ENCODE measurements at regions of chr15 and their contacts with region 1.

Region 1: GRCh38 chr15:51982013-51982769 is 10.6 kb upstream of the LEO1 start:
- DNase-seq: peak in 1 of 2 donors; percentile 82
- ATAC-seq: peak; percentile 87 to 95 (median 93)
- H3K4me3 ChIP-seq: no peak overlapping the region
- H3K4me3 Mint-ChIP-seq: peak overlapping the region; percentile 56
- H3K27ac ChIP-seq: no peak overlapping the region
- H3K27ac Mint-ChIP-seq: peak overlapping the region in 1 of 2 donors; percentile 69
- H3K4me1 ChIP-seq: peaks cover 3% of the 10 kb centered on the region
- H3K4me1 Mint-ChIP-seq: peaks cover 11% of the 10 kb centered on the region in 2 donors
- H3K27me3 ChIP-seq: no peaks in the 10 kb centered on the region
- H3K27me3 Mint-ChIP-seq: no peaks in the 10 kb centered on the region
- CTCF ChIP-seq: peak; percentile 69

Region 2: GRCh38 chr15:51837792-51838251 is 144.4 kb before region 1 on chr15:
- intact Hi-C with region 1: no loop called
- DNase-seq: peak in 1 of 2 donors; percentile 45
- ATAC-seq: peak; percentile 70 to 87 (median 83)
- H3K4me3 ChIP-seq: no peak overlapping the region
- H3K4me3 Mint-ChIP-seq: no peak overlapping the region
- H3K27ac ChIP-seq: peak overlapping the region; percentile 13
- H3K27ac Mint-ChIP-seq: peak overlapping the region; percentile 54 to 73
- H3K4me1 ChIP-seq: peaks cover 16% of the 10 kb centered on the region
- H3K4me1 Mint-ChIP-seq: peaks cover 79 to 92% of the 10 kb centered on the region in 2 donors
- H3K27me3 ChIP-seq: no peaks in the 10 kb centered on the region
- H3K27me3 Mint-ChIP-seq: no peaks in the 10 kb centered on the region
- CTCF ChIP-seq: no peak

Region 3: DNA sequence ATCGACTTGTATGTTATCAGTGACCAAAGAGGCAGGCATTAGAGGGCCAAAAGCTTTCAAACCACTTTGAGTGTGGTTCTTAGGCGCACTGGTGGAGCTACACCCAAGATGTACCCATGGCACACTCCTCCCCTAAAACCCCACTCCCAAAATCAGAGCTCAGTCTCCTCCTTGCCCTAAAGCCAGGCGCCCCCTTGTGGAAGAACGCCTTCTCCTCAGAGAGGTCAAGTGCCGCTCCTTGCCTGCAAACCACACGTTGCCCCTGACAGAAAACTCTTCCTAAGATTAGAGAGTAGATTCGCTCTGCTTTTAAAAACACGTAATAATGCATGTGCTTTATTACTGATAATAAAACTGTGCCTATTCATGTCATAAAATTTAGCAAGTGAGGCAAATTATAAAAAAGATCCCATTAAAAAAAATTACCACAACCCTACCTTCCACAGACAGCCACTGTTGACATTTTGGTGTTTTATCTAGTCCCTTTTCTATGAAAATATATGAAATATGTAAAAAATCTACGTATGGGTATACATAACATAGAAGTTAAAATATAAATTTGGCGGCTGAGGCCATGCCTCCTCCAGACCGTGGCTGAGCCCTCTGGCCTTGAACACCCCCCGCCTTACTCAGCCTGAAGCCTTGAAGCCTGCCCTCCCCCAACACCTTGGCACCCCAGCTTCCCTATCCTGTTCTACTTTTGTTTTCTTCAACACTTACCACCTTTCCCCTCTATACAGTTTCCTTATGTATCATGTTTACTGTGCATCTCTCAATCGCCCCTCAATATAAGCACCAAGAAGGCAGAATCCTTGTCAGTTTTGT is 96.9 kb after region 1 on chr15:
- intact Hi-C with region 1: loop called (anchors 1 kb)
- DNase-seq: peak; percentile 63 to 88
- ATAC-seq: peak; percentile 54 to 83 (median 77)
- H3K4me3 ChIP-seq: no peak overlapping the region
- H3K4me3 Mint-ChIP-seq: no peak overlapping the region
- H3K27ac ChIP-seq: no peak overlapping the region
- H3K27ac Mint-ChIP-seq: no peak overlapping the region
- H3K4me1 ChIP-seq: peaks cover 17% of the 10 kb centered on the region
- H3K4me1 Mint-ChIP-seq: peaks cover 18 to 30% of the 10 kb centered on the region in 2 donors
- H3K27me3 ChIP-seq: no peaks in the 10 kb centered on the region
- H3K27me3 Mint-ChIP-seq: peaks cover 23 to 37% of the 10 kb centered on the region in 2 donors
- CTCF ChIP-seq: peak; percentile 80

Region 4: DNA sequence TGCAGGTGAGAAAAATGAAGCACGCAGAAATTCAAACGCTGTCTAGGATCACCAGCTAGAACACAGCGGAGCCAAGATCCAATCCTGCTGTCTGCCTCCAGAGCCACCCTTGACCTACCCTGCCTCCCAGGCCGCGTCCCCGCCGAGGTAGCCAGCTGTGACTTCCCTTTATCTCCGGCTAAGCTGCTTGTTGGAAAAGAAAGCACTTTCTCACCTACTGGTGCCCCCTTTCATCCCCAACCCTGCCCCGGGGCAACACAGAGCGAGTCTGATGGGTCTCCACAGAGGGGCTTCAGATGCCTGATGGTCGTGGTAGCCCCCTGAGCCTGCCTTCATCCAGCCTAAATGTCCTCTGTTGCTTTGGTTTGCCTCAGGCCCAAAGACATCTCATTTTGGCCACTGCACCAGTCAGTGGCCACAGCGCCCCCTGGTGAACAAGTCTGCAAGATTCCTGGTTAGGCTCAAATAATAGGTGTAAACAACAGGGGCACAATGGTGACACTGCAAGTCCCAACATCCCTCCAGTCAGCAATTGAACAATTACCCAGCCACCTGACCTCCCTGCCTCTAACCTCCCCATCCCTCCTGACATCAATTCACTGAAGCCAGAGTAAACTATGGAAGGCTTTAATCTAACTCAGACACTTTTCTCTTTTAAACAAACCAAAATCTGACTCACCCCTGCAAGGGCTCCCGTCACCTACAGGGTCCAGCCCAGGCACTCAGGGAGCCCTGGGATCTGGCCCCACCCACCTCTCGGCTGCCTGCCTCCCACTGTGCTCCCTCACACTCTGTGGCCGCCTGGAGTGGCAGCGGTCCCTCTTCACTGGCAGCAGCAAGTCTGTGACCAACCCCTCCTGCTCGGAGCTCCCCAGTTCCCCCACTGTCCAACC is 157.7 kb after region 1 on chr15:
- intact Hi-C with region 1: loop called (anchors 5 kb)
- DNase-seq: peak; percentile 52 to 77
- ATAC-seq: peak; percentile 47 to 59 (median 53)
- H3K4me3 ChIP-seq: no peak overlapping the region
- H3K4me3 Mint-ChIP-seq: no peak overlapping the region
- H3K27ac ChIP-seq: no peak overlapping the region
- H3K27ac Mint-ChIP-seq: no peak overlapping the region
- H3K4me1 ChIP-seq: peaks cover 21% of the 10 kb centered on the region
- H3K4me1 Mint-ChIP-seq: peaks cover 8 to 24% of the 10 kb centered on the region in 2 donors
- H3K27me3 ChIP-seq: no peaks in the 10 kb centered on the region
- H3K27me3 Mint-ChIP-seq: no peaks in the 10 kb centered on the region
- CTCF ChIP-seq: peak; percentile 74

Region 5: GRCh38 chr15:52227456-52227855 is 245.3 kb after region 1 on chr15:
- intact Hi-C with region 1: loop called (anchors 1 kb)
- DNase-seq: peak; percentile 28 to 88
- ATAC-seq: peak; percentile 92 to 100 (median 99)
- H3K4me3 ChIP-seq: no peak overlapping the region
- H3K4me3 Mint-ChIP-seq: no peak overlapping the region
- H3K27ac ChIP-seq: peak overlapping the region; percentile 24
- H3K27ac Mint-ChIP-seq: no peak overlapping the region
- H3K4me1 ChIP-seq: peaks cover 13% of the 10 kb centered on the region
- H3K4me1 Mint-ChIP-seq: peaks cover 0 to under 1% of the 10 kb centered on the region in 2 donors
- H3K27me3 ChIP-seq: no peaks in the 10 kb centered on the region
- H3K27me3 Mint-ChIP-seq: peaks cover 0 to 4% of the 10 kb centered on the region in 2 donors
- CTCF ChIP-seq: peak; percentile 79

Measured in natural killer cell (primary cell).